Vagina (tissue), 2 donors: ENCODE measurements at regions of chr6 and their contacts with region 1.

Region 1: DNA sequence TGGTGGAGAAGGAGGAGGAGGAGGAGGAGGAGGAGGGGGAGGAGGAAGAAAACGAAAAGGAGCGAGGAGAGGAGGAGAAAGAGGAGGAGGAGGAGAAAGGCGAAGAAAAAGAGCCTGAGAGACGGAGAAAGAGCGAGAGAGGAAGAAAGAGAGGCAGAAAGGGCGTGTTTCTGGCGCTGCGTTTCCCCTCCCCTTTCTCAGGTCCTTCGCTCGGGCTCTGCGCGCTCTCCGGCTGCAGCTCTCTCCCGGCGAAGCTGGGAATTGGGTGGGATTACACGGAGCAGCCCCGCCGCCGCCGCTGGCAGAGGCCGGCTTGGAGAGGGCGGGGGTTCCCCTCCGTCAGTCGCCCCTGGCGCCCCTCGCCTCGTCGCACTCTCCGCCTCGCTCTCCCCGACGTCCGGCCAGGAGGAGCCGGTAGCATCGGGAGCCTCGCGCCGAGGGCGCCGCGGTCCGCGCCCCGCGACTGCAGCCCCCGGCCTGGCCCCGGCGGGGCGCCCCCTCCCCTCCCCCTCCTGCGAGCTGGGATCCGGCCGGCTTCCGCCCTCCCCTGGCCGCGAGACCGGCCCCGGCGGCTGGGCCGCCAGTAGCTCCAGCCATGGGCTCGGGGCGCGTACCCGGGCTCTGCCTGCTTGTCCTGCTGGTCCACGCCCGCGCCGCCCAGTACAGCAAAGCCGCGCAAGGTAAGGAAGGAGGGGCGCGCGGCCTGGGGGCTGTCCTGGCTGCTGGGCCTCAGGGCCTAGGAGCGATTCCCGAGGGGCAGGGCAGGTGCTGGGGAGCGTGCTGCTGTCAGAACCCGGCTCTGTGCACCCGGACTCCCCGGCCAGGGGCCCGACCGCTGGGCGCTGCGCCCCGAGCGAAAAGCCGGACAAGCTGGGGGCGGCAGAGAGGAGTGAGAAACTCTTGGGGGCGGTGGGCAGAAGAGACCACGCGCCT is at the start of gene SCUBE3:
- DNase-seq: no peak
- H3K4me3 ChIP-seq: peak within 1 kb of the TSS; percentile 42 to 67
- H3K27ac ChIP-seq: no peak within 1 kb of the TSS
- H3K4me1 ChIP-seq: peaks cover 16% of the 10 kb centered on the region
- H3K27me3 ChIP-seq: no peaks in the 10 kb centered on the region
- CTCF ChIP-seq: no peak
- POLR2A ChIP-seq: no peak
- total RNA-seq, gene SCUBE3: 0.49 TPM

Region 2: GRCh38 chr6:35240840-35241801 is 27.0 kb after region 1 on chr6:
- intact Hi-C with region 1: no loop called
- DNase-seq: no peak
- H3K4me3 ChIP-seq: no peak overlapping the region
- H3K27ac ChIP-seq: no peak overlapping the region
- H3K4me1 ChIP-seq: peaks cover 10% of the 10 kb centered on the region
- H3K27me3 ChIP-seq: no peaks in the 10 kb centered on the region
- CTCF ChIP-seq: peak; percentile 72 to 87 (median 82)
- POLR2A ChIP-seq: no peak

Region 3: GRCh38 chr6:36349240-36349639 is 1135.2 kb after region 1 on chr6:
- intact Hi-C with region 1: loop called (anchors 5 kb)
- DNase-seq: no peak
- H3K4me3 ChIP-seq: no peak overlapping the region
- H3K27ac ChIP-seq: no peak overlapping the region
- H3K4me1 ChIP-seq: peaks cover 7% of the 10 kb centered on the region
- H3K27me3 ChIP-seq: no peaks in the 10 kb centered on the region
- CTCF ChIP-seq: no peak
- POLR2A ChIP-seq: no peak